Motor neuron (in vitro differentiated cells): ENCODE measurements at regions of chr6 and their contacts with region 1.

Region 1: GRCh38 chr6:82270881-82271645 is 23.5 kb upstream of the IBTK start:
- ATAC-seq: peak in 4 of 8 experiments; percentile 15 to 54 (median 40)
- H3K4me3 ChIP-seq: no peak overlapping the region
- H3K27ac ChIP-seq: no peak overlapping the region
- H3K4me1 ChIP-seq: peaks cover 0 to 12% of the 10 kb centered on the region in 2 donors

Region 2: GRCh38 chr6:81491454-81492101 is 779.5 kb before region 1 on chr6:
- in situ Hi-C with region 1: no loop called
- ATAC-seq: no peak
- H3K4me3 ChIP-seq: no peak overlapping the region
- H3K27ac ChIP-seq: no peak overlapping the region
- H3K4me1 ChIP-seq: no peaks in the 10 kb centered on the region

Region 3: DNA sequence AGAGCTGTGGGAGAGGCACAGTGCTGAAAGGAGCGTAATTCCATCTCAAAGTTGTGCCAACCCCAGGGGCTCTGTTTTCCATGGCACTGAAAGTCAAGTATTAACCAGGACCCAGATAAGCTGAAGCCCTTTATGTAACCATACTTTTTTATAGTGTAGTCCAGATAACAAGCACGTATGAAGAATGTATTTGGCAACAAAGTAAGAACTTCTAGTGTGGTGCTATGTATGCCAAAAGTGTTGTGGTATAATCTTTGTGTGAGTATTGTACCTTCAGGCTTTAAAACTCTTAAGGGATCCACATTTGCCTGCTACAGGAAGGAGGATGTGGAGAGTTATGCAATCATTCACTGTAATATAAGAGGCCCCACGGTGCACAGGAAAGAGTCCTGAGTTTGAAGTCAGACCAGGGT is 152.9 kb before region 1 on chr6:
- in situ Hi-C with region 1: no loop called
- ATAC-seq: no peak
- H3K4me3 ChIP-seq: no peak overlapping the region
- H3K27ac ChIP-seq: no peak overlapping the region
- H3K4me1 ChIP-seq: no peaks in the 10 kb centered on the region

Region 4: DNA sequence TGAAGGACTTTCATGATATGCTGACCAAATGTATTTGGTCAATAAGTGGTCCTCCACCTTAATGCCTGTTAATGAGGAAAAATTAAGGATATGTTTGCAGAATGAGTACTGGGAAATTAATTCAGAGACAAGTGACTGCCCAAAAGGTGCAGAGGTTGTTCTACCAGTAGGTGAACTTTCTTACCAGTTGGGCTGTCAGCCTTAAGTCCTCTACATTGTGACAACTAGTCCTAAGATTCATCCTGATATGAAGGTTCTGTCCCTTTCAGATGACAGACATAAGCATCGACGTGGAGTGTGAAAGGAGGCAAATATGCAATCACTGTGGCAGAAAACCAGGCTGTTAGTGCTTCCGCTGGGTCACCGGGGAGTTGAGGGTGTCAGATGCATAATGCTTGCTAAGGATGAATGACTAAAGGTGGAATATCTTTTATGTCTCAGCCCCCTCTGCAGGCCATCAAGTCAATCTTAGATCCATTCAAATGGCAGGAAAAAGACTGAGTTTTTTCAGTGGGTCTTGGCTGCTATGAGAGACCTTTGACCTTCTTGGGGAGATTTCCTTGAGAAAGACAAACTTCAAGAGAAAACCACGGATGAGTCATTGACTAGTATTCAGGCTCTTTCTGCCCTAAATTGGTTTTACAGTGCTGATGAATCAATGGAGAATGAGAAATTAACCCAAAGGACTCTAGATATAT is 318.6 kb after region 1 on chr6:
- in situ Hi-C with region 1: loop called in 2 of 9 experiments (anchors 25 kb)
- ATAC-seq: peak in 6 of 8 experiments; percentile 27 to 78 (median 54)
- H3K4me3 ChIP-seq: no peak overlapping the region
- H3K27ac ChIP-seq: no peak overlapping the region
- H3K4me1 ChIP-seq: peaks cover 0 to 7% of the 10 kb centered on the region in 2 donors

Region 5: GRCh38 chr6:82712852-82713251 is 441.8 kb after region 1 on chr6:
- in situ Hi-C with region 1: loop called in 1 of 9 experiments (anchors 25 kb)
- ATAC-seq: no peak
- H3K4me3 ChIP-seq: no peak overlapping the region
- H3K27ac ChIP-seq: no peak overlapping the region
- H3K4me1 ChIP-seq: peaks cover 0 to 6% of the 10 kb centered on the region in 2 donors

Region 6: DNA sequence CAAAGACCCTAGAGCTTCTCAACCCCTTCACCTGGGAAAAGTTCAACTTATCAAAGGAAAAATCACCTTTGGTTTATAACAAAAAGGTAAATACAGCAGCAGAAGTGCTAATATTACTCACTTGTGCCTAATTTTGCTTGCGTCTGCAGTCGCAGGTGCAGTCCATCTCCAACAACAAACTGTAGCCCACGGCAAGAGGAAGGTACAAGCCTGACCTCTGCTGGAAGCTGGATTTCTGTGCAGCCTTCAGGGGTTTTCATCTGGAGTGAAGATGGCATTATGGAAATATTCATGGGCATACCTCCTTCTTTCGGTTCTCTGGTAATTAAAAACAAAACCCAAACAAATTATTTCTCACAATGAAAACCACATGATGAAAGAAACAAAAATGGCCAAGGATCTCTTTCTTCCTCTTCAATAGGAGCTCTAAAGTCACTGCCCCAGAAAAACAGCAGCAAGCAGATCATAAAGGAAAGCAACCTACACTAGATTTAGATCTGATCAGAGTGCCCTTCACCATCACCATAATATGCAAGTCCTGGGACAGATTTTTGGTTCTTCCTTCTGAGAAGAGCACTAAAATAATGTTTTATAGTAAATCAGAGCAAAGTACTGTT is 786.8 kb after region 1 on chr6:
- in situ Hi-C with region 1: loop called (anchors 10 to 25 kb)
- ATAC-seq: peak; percentile 63 to 95 (median 82)
- H3K4me3 ChIP-seq: no peak overlapping the region
- H3K27ac ChIP-seq: no peak overlapping the region
- H3K4me1 ChIP-seq: no peaks in the 10 kb centered on the region

Region 7: GRCh38 chr6:83067448-83068413 is 796.7 kb after region 1 on chr6 and contains the start of gene DOP1A:
- in situ Hi-C with region 1: loop called in 3 of 9 experiments (anchors 25 kb)
- ATAC-seq: peak; percentile 85 to 90 (median 88)
- H3K4me3 ChIP-seq: peak within 1 kb of the TSS; percentile 58 to 90 (median 79)
- H3K27ac ChIP-seq: peak within 1 kb of the TSS; percentile 91 to 92
- H3K4me1 ChIP-seq: peaks cover 10 to 15% of the 10 kb centered on the region in 2 donors
- total RNA-seq, gene DOP1A: 15.2 to 36.8 (median 25.0) TPM